ENCODE measurements at regions of chr5 and their contacts with region 1.

Region 1: DNA sequence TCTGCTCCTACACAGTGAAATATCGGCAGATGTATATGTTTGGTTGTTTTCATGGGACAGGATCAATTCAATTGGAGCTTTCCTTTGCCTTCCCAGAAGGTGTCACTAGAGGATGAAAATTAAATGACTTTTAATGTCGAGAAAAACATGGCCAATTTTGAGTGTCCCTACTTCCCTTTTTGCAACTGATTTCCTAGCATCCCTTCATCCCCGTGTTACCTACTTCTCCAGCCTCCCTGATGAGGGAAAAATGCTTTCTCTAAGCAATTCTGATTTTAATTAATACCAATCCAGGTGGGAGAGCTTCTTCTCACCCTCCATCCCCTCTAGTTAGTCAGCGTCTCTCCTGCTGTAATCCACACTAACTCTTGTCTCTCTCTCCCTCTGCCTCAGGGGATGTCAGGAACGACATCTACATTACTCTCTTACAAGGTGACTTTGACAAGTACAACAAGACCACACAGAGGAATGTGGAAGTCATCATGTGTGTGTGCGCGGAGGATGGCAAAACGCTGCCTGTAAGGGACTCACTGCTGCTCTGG is 64.9 kb downstream of the DOCK2 start:
- DNase-seq: peak; percentile 56
- H3K4me3 Mint-ChIP-seq: no peak overlapping the region
- H3K27ac Mint-ChIP-seq: no peak overlapping the region
- H3K4me1 Mint-ChIP-seq: peaks cover 33% of the 10 kb centered on the region
- H3K27me3 Mint-ChIP-seq: no peaks in the 10 kb centered on the region
- CTCF ChIP-seq: peak; percentile 82

Region 2: GRCh38 chr5:169686137-169686536 is 15.8 kb before region 1 on chr5:
- CTCF ChIA-PET with region 1: interaction called, 27 read pairs
- POLR2A ChIA-PET with region 1: no interaction called
- intact Hi-C with region 1: no loop called
- DNase-seq: no peak
- H3K4me3 Mint-ChIP-seq: no peak overlapping the region
- H3K27ac Mint-ChIP-seq: no peak overlapping the region
- H3K4me1 Mint-ChIP-seq: no peaks in the 10 kb centered on the region
- H3K27me3 Mint-ChIP-seq: no peaks in the 10 kb centered on the region
- CTCF ChIP-seq: no peak

Region 3: GRCh38 chr5:169914766-169915165 is 212.8 kb after region 1 on chr5:
- CTCF ChIA-PET with region 1: interaction called, 11 read pairs
- POLR2A ChIA-PET with region 1: no interaction called
- intact Hi-C with region 1: no loop called
- DNase-seq: peak; percentile 24
- H3K4me3 Mint-ChIP-seq: no peak overlapping the region
- H3K27ac Mint-ChIP-seq: no peak overlapping the region
- H3K4me1 Mint-ChIP-seq: no peaks in the 10 kb centered on the region
- H3K27me3 Mint-ChIP-seq: no peaks in the 10 kb centered on the region
- CTCF ChIP-seq: no peak

Region 4: DNA sequence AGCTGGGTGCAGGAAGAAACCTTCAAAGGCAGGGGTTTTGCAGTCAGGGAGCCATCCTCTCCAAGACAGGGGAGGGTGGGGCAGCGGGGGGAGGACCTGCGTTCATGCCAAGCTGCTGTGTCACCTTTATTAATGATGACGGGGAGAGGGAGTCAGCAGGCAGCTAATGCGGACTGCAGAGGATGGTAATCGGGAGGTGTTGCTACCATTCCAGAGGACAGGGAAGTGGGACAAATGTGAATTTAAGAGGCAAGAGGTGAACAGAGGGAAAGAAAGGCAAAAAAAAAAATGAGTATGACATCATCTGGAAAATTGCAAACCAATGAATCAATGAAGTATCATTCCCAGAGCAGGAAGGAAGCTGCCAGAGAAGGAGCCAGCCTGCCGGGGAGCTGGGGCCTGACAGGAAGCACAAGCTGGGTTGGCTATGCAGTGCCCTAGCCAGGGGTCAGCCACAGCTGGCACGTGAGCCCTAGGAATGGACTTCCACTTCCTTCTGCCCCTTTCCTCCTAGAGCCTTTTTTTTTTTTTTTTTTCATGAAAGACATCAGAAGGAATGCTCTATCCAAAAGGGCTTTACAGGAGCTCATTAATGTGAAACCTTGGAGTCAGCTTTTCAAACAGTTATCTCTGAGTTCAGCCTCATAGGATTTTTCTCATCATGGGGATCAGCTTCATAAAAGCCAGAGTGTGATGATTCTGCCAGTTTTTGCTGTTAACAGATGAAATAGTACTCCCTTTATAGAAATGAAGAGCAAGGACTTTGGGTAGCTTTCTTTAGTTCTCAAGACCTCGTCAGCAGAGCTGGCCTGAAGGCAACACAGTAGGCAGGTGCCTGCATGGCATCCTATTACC is 269.2 kb after region 1 on chr5:
- CTCF ChIA-PET with region 1: interaction called, 18 read pairs
- POLR2A ChIA-PET with region 1: no interaction called
- intact Hi-C with region 1: no loop called
- DNase-seq: peak; percentile 55
- H3K4me3 Mint-ChIP-seq: peak overlapping the region; percentile 17
- H3K27ac Mint-ChIP-seq: no peak overlapping the region
- H3K4me1 Mint-ChIP-seq: peaks cover 19% of the 10 kb centered on the region
- H3K27me3 Mint-ChIP-seq: no peaks in the 10 kb centered on the region
- CTCF ChIP-seq: no peak

Region 5: GRCh38 chr5:170070556-170071412 is 368.8 kb after region 1 on chr5:
- CTCF ChIA-PET with region 1: interaction called, 53 read pairs
- POLR2A ChIA-PET with region 1: no interaction called
- intact Hi-C with region 1: loop called (anchors 1 kb)
- DNase-seq: peak; percentile 60
- H3K4me3 Mint-ChIP-seq: no peak overlapping the region
- H3K27ac Mint-ChIP-seq: no peak overlapping the region
- H3K4me1 Mint-ChIP-seq: no peaks in the 10 kb centered on the region
- H3K27me3 Mint-ChIP-seq: peaks cover 31% of the 10 kb centered on the region
- CTCF ChIP-seq: peak; percentile 81

Region 6: GRCh38 chr5:170216266-170216864 is 514.4 kb after region 1 on chr5:
- CTCF ChIA-PET with region 1: interaction called, 22 read pairs
- POLR2A ChIA-PET with region 1: interaction called, 3 read pairs
- intact Hi-C with region 1: loop called (anchors 2 kb)
- DNase-seq: peak; percentile 68
- H3K4me3 Mint-ChIP-seq: no peak overlapping the region
- H3K27ac Mint-ChIP-seq: no peak overlapping the region
- H3K4me1 Mint-ChIP-seq: peaks cover 6% of the 10 kb centered on the region
- H3K27me3 Mint-ChIP-seq: no peaks in the 10 kb centered on the region
- CTCF ChIP-seq: peak; percentile 76